ENCODE measurements at regions of chr1 and their contacts with region 1.

Region 1: GRCh38 chr1:27044613-27045151 is 32.0 kb upstream of the TENT5B start:
- DNase-seq: peak; percentile 81
- H3K4me3 Mint-ChIP-seq: peak overlapping the region; percentile 82
- H3K27ac Mint-ChIP-seq: peak overlapping the region; percentile 86
- H3K4me1 Mint-ChIP-seq: peaks cover 18% of the 10 kb centered on the region
- H3K27me3 Mint-ChIP-seq: peaks cover 3% of the 10 kb centered on the region

Region 2: DNA sequence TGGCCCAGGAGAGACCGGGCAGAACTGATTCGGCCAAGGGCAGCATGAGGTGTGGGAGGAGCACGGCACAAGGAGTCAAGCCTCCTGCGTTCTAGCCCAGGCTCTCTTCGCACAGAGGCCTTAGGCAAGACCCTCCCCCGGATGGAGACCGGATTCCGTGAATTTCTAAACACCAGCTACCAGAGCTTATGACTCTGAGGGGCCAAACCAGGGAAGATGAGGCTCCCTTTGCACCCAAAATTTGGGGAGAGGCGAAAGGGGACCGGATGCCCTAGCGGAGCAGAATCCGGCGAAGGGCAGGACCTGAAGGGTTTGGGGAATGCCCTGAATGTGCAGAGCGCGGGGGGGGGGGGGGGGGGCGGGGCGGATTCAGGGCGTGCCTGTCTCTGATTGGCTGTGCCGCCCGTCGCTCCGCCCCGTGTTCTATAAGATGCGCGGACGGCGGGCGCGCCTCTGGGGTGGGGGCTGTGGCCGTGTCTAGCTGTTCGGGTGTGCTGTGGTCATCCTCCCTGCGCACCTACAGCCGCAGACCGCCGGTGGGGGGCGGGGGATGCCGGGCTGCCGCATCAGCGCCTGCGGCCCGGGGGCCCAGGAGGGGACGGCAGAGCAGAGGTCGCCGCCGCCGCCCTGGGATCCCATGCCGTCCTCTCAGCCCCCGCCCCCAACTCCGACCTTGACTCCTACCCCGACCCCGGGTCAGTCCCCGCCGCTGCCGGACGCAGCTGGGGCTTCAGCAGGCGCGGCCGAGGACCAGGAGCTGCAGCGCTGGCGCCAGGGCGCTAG is 51.3 kb before region 1 on chr1 and contains the start of gene TRNP1:
- intact Hi-C with region 1: loop called (anchors 2 kb)
- DNase-seq: peak; percentile 69
- H3K4me3 Mint-ChIP-seq: peak within 1 kb of the TSS; percentile 81
- H3K27ac Mint-ChIP-seq: peak within 1 kb of the TSS; percentile 21
- H3K4me1 Mint-ChIP-seq: peaks cover 21% of the 10 kb centered on the region
- H3K27me3 Mint-ChIP-seq: peaks cover 55% of the 10 kb centered on the region
- total RNA-seq, gene TRNP1: 2.0 TPM in 2 replicates

Region 3: DNA sequence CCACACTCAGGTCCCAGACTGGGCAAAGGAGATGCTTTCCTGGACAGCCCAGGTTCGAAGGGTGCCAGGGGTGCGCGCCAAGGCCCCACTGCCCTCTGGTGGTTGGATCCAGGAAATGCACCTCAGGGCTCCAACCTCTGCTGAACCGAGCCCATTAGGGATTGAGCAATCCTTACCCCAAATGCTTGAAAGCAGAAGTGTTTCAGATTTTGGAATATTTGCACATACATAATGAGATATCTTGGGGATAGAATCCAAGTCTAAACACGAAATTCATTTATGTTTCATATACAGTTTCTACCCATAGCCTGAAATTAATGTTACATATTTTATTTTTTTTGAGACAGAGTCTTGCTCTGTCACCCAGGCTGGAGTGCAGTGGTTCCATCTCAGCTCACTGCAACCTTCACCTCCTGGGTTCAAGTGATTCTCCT is 52.8 kb after region 1 on chr1:
- intact Hi-C with region 1: loop called (anchors 1 kb)
- DNase-seq: peak; percentile 64
- H3K4me3 Mint-ChIP-seq: no peak overlapping the region
- H3K27ac Mint-ChIP-seq: no peak overlapping the region
- H3K4me1 Mint-ChIP-seq: peaks cover 14% of the 10 kb centered on the region
- H3K27me3 Mint-ChIP-seq: peaks cover 3% of the 10 kb centered on the region

Region 4: GRCh38 chr1:27201295-27201694 is 156.6 kb after region 1 on chr1:
- intact Hi-C with region 1: loop called (anchors 1 kb)
- DNase-seq: no peak
- H3K4me3 Mint-ChIP-seq: no peak overlapping the region
- H3K27ac Mint-ChIP-seq: no peak overlapping the region
- H3K4me1 Mint-ChIP-seq: peaks cover 6% of the 10 kb centered on the region
- H3K27me3 Mint-ChIP-seq: peaks cover 6% of the 10 kb centered on the region

Region 5: DNA sequence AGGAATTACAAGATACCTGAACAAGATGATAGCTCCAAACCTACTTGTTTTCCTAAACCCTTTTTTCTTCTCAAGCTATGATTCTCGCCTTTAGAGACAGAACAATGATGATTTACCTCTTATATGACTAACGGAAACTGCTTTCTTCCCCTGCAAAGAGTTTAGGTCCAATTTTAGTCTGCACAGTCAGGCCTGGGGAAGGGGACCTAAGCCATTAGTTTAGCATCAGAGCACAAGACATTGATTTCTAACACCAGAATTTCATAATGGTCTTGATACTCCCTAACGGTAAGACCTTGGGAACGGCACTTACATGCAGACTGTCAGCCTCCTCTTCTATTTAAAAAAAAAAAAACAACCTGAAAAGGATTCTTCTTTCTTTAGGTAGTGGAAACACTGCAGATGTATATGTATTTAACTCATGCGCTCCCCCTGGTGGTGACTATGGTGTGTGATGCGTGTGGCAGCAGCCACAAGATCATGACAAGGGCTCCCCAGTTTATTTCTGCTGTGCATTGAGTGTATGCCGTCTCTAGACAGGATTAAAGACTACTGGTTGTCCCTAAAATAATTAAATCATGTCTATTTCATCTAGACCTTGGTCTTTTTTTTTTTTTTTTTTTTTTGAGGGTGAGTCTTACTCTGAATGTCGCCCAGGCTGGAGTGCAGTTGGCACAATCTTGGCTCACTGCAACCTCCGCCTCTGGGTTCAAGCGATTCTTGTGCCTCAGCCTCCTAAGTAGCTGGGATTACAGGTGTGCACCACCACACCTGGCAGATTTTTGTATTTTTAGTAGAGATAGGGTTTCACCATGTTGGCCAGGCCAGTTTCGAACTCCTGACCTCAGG is 240.0 kb after region 1 on chr1:
- intact Hi-C with region 1: loop called (anchors 1 kb)
- DNase-seq: peak; percentile 74
- H3K4me3 Mint-ChIP-seq: no peak overlapping the region
- H3K27ac Mint-ChIP-seq: no peak overlapping the region
- H3K4me1 Mint-ChIP-seq: peaks cover 6% of the 10 kb centered on the region
- H3K27me3 Mint-ChIP-seq: peaks cover 4% of the 10 kb centered on the region

Region 6: DNA sequence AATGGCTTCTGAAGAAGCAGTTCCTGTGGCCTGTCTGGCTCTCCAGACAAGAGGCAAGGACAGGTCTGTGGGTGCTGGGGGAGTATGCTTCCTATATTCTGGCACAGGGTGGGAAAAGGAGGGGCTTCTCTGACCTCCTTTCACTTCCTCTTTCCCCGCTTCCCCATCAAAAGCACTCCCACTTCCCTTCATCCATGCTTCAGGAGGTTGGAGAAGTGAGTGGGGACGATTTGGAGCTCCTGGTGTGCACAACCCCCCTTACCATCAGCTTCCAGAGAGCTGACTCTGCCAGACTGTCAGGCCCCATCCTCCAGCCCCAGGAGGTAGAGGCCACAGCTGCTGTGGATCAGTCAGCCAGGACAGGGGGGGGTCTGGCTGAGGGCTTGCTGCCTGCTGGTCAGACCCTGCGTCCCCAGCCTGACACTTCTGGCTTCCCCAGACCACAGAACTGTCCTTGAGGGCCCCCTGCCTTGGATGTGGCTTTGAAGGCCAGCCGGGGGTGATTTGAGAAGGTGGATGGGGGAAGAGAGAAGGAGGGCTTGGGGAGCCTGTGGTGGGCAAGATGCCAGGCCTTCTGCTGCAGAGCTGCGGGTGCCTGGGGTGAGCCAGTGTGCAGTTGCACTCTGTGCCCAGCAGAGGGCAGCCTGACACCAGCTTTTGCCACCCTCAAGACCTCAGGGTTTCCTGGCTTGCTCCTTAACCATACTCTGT is 255.8 kb after region 1 on chr1:
- intact Hi-C with region 1: loop called (anchors 5 kb)
- DNase-seq: peak; percentile 61
- H3K4me3 Mint-ChIP-seq: no peak overlapping the region
- H3K27ac Mint-ChIP-seq: no peak overlapping the region
- H3K4me1 Mint-ChIP-seq: peaks cover 4% of the 10 kb centered on the region
- H3K27me3 Mint-ChIP-seq: no peaks in the 10 kb centered on the region

Measured in activated T-helper 1 cell treated with anti-CD3 and anti-CD28 coated beads, Interleukin-12 subunit alpha, Interleukin-12 subunit beta, Interleukin-2, Interleukin-4 antibody, amounts not matched to agents 30 ng/mL and 10 ng/mL and 1 ng/mL, durations not matched to agents 14 hours and 24 hours and 36 hours (primary cell).